Heart right ventricle (tissue), 16 donors: ENCODE measurements at regions of chr3 and their contacts with region 1.

Region 1: DNA sequence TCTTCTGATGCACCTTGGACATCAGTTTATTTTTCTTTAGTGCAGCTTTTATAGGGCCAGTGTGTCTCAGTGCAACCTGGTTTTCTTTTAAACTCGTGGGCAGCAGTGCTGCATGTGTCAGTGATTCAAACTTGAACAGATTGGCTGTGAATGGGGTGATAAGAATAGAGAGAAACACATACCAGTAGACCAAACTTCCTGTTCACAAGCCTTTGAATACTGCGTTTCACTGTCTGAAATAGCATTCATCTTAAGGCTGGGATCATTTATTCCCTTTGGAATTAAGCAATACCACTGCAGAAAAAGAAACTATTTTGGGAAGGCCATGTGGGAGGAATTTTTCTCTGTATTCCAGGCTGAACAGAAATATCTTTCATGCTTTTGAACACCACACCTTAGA is 51.7 kb downstream of the PHLDB2 start:
- DNase-seq: no peak
- ATAC-seq: peak; percentile 42 to 91 (median 74)
- H3K4me3 ChIP-seq: no peak overlapping the region
- H3K27ac ChIP-seq: peak overlapping the region in 9 of 10 donors; percentile 32 to 65 (median 48)
- H3K4me1 ChIP-seq: peaks cover 8 to 86% (median 76%) of the 10 kb centered on the region in 9 donors
- H3K27me3 ChIP-seq: no peaks in the 10 kb centered on the region
- CTCF ChIP-seq: no peak

Region 2: DNA sequence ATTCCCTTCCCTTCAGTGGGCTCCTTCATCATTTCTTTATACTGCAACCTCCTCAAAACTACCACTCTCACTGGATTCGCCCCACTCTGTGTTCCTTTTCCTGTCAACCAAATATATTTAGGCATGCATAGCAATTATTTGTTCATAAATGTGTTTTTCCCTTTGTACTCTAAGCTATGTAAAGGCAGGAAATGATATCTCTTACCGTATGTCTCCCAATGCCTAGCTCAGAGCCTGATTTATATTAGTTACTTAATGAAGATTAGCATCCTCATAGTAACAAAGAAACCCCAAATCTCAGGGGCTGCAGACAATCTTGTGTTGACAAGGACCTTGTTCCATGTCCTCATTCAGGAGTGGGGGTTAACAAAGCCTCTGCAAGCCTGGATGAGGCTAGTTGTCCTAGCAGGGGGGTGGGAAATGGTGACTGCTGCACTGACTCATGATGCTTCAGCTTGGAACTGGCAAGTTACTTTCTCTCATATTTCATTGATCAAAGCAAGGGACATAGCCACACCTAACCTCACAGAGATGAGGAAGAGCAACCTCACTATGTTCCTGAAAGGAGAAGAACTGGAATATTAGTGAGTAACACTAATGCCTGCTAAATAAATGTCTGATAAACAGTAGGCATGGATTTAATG is 36.5 kb before region 1 on chr3:
- intact Hi-C with region 1: loop called in 3 of 10 experiments (anchors 5 to 10 kb)
- DNase-seq: no peak
- ATAC-seq: peak in 4 of 8 donors; percentile 26 to 69 (median 48)
- H3K4me3 ChIP-seq: no peak overlapping the region
- H3K27ac ChIP-seq: peak overlapping the region in 2 of 10 donors; percentile 1 to 100
- H3K4me1 ChIP-seq: peaks cover 0 to 69% (median 62%) of the 10 kb centered on the region in 9 donors
- H3K27me3 ChIP-seq: no peaks in the 10 kb centered on the region
- CTCF ChIP-seq: no peak

Region 3: DNA sequence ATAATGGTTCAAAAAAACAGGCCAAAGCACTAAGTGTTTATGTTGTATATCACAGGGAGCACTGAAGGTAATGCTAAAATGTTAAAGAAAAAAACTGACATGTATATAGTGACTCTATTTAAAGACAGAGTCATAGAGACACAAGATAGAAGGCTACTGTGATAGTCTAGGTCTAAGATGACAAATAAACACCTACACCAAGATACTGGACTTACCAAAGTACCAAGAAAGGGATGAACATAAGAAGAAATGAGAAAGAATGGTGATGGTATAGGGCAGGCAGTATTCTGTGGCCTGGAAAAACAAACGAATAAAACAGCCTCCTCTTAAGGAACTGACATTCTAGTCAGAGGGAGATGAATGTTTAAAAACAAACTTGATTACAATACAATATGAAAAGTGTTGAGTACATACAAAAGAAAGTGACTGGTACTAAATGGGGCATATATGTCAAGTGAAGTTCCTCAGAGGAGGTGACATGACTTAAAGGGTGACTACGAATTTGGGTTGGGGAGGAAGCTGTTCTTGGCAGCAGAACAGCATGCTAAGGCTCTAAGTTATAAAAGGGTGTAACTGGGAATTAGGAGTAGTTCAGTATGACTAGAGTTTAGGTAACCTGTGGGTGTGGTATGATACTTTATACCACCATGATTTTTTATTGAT is 74.0 kb after region 1 on chr3:
- intact Hi-C with region 1: no loop called
- DNase-seq: no peak
- ATAC-seq: no peak
- H3K4me3 ChIP-seq: no peak overlapping the region
- H3K27ac ChIP-seq: no peak overlapping the region
- H3K4me1 ChIP-seq: peaks cover 0 to 37% (median 31%) of the 10 kb centered on the region in 9 donors
- H3K27me3 ChIP-seq: no peaks in the 10 kb centered on the region
- CTCF ChIP-seq: no peak

Region 4: GRCh38 chr3:111998636-111999483 is 88.1 kb after region 1 on chr3 and contains the start of gene TAGLN3:
- intact Hi-C with region 1: no loop called
- DNase-seq: peak in 1 of 2 donors; percentile 12
- ATAC-seq: peak in 7 of 8 donors; percentile 28 to 72 (median 56)
- H3K4me3 ChIP-seq: peak within 1 kb of the TSS in 9 of 10 donors; percentile 26 to 57 (median 48)
- H3K27ac ChIP-seq: no peak within 1 kb of the TSS
- H3K4me1 ChIP-seq: peaks cover 0 to 23% (median 13%) of the 10 kb centered on the region in 9 donors
- H3K27me3 ChIP-seq: peaks cover 0 to 30% (median 0%) of the 10 kb centered on the region in 7 donors
- CTCF ChIP-seq: no peak
- total RNA-seq, gene TAGLN3: 0.36 to 1.1 (median 0.58) TPM in 7 of 10 donors, not detected in the others

Region 5: GRCh38 chr3:112074721-112075497 is 164.1 kb after region 1 on chr3:
- intact Hi-C with region 1: no loop called
- DNase-seq: no peak
- ATAC-seq: peak in 6 of 8 donors; percentile 50 to 75 (median 61)
- H3K4me3 ChIP-seq: no peak overlapping the region
- H3K27ac ChIP-seq: no peak overlapping the region
- H3K4me1 ChIP-seq: peaks cover 0 to 10% (median 0%) of the 10 kb centered on the region in 9 donors
- H3K27me3 ChIP-seq: peaks cover 0 to 7% (median 0%) of the 10 kb centered on the region in 7 donors
- CTCF ChIP-seq: no peak